ENCODE measurements at regions of chr9 and their contacts with region 1.

Region 1: GRCh38 chr9:126228781-126229444 is 97.7 kb upstream of the MVB12B start:
- DNase-seq: peak; percentile 66 to 85 (median 77)
- H3K4me3 ChIP-seq: no peak overlapping the region
- H3K27ac ChIP-seq: no peak overlapping the region
- H3K4me1 ChIP-seq: no peaks in the 10 kb centered on the region
- H3K27me3 ChIP-seq: no peaks in the 10 kb centered on the region
- CTCF ChIP-seq: peak; percentile 67 to 91 (median 82)
- EP300 ChIP-seq: no peak
- POLR2A ChIP-seq: no peak

Region 2: DNA sequence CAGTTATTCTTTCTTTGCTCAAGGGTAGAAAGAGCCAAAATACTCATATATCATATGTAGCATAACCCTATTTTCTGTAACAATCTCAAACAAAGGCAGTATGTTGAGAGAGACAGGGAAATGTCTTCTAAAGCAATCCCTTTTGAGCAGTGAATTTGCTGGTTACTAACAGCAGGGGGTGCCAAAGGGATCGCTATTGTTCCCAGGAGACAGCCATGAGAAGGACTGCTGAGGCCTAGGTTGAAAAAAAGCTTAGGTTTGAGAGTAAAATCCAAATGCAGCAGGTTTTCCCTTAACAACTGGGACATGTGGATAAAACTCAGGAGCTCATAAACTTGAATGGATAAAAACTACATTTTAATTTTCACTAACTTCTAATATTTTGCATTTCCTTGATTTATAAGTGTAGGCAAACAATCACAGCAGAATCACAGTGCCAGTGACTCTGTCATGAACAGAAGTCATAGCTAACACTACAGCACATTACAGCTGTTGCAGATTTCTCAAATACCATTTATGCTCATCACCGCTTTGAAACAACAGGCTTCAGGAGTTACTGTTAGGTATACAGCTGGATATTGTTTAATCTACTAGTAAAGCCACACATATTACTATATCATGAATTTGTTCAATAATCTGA is 670.3 kb before region 1 on chr9:
- intact Hi-C with region 1: loop called in 1 of 4 experiments (anchors 10 kb)
- DNase-seq: peak in 3 of 5 donors; percentile 52 to 73 (median 54)
- H3K4me3 ChIP-seq: no peak overlapping the region
- H3K27ac ChIP-seq: peak overlapping the region in 1 of 2 donors; percentile 18
- H3K4me1 ChIP-seq: no peaks in the 10 kb centered on the region
- H3K27me3 ChIP-seq: no peaks in the 10 kb centered on the region
- CTCF ChIP-seq: peak; percentile 48 to 69 (median 65)
- EP300 ChIP-seq: no peak
- POLR2A ChIP-seq: no peak

Measured in ovary (tissue), 10 donors.